Heart left ventricle (tissue), 16 donors: ENCODE measurements at regions of chr21 and their contacts with region 1.

Region 1: DNA sequence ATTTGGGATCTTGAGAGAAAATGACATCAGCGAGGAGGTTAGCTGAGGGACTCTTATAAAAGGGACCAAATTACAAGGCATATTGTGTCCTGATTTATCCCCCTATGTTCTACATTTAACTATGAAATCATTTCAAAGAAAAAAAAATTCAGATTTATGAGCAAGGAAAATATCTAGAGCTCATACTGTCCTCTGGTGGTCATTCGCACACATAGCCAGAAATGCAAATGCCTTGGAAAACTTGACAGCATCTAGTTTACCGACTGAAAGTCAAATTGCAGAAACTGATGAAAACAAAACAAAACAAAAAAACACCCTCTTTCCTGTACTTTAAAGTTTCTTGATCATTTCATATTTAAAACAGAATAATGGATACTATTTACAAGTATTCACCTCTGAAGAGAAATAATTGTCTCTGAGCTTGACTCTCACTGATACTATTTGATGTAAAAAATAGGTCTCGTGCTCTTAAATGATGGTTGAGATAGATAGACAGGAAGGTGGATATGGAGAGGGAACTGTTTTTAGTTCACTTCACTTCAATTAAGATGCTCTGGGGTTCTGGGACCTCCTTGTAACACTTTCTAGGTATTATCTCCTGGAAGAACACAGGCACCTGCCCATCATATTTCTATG is 253.8 kb downstream of the PCP4 start:
- DNase-seq: no peak
- ATAC-seq: no peak
- H3K4me3 ChIP-seq: no peak overlapping the region
- H3K27ac ChIP-seq: no peak overlapping the region
- H3K4me1 ChIP-seq: peaks cover 0 to 3% (median 0%) of the 10 kb centered on the region in 12 donors
- H3K27me3 ChIP-seq: peaks cover 0 to 4% (median 0%) of the 10 kb centered on the region in 9 donors
- CTCF ChIP-seq: peak; percentile 59 to 82 (median 77)
- POLR2A ChIP-seq: no peak

Region 2: DNA sequence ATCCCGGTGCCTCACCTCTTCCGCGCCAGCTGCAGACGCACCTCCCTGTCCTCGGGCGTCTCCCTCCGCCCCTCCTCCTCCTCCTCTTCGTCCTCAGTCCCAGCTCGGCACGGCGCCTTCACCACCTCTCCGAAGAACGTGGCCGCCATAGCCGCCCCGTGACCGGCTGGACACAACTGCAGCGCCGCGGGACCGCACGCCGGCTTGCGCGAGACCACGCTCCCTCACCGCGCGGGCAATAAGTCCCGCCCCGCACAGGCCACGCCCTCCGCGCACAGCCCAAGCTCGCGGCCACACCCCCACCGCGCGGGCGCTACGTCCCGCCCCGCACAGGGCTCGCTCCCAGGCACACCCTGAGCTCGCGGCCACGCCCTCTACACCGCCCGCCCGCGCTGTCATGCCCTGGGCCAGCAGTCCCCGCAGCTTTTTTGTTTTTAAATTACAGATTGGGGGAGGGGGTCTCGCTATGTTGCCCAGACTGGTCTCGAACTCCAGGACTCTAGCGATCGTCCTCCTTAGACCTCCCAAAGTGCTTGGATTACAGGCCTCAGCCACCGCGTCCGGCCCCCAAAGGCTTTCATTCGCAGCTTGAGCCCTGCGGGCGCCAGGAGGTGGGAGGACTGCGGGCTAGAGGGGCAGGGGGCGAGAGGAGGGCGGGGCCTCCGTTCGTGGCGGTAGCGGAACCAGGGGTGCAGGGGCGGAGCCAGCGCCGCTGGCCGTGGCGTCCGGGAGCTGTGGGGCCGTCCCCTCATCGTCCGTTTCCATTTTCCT is 937.6 kb before region 1 on chr21 and contains the start of gene PSMG1:
- intact Hi-C with region 1: no loop called
- DNase-seq: peak; percentile 94 to 97 (median 95)
- ATAC-seq: peak; percentile 97 to 98 (median 98)
- H3K4me3 ChIP-seq: peak within 1 kb of the TSS; percentile 72 to 97 (median 86)
- H3K27ac ChIP-seq: peak within 1 kb of the TSS; percentile 82 to 96 (median 92)
- H3K4me1 ChIP-seq: peaks cover 0 to 24% (median 14%) of the 10 kb centered on the region in 12 donors
- H3K27me3 ChIP-seq: no peaks in the 10 kb centered on the region
- CTCF ChIP-seq: peak in 1 of 12 donors; percentile 14
- POLR2A ChIP-seq: peak in 1 of 2 donors; percentile 72
- total RNA-seq, gene PSMG1: 12.0 to 31.6 (median 25.3) TPM

Region 3: DNA sequence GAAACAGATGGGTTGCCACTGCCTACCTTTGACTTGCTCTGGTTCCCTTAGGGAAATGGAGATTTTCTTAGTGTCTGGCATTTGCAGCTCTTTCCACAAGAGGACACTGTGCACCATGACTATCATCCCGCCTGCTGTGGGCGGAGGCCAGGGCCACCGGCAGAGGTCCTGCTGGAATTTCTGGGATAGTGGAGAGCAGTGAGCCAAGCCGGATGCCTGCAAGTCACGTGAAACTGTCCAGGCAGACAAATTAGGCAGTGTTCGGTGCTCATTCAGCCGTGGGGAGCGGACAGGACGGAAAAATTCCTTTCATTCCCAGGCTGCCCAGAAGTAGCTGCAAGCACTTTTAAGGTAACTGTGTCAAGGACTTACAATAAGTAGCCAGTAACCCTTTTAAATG is 332.7 kb before region 1 on chr21:
- intact Hi-C with region 1: loop called (anchors 1 to 5 kb)
- DNase-seq: peak; percentile 75 to 91 (median 84)
- ATAC-seq: peak; percentile 98 to 99 (median 99)
- H3K4me3 ChIP-seq: peak overlapping the region in 11 of 12 donors; percentile 14 to 50 (median 37)
- H3K27ac ChIP-seq: peak overlapping the region in 8 of 12 donors; percentile 26 to 59 (median 50)
- H3K4me1 ChIP-seq: peaks cover 0 to 12% (median 0%) of the 10 kb centered on the region in 12 donors
- H3K27me3 ChIP-seq: no peaks in the 10 kb centered on the region
- CTCF ChIP-seq: peak; percentile 51 to 92 (median 76)
- POLR2A ChIP-seq: no peak

Region 4: DNA sequence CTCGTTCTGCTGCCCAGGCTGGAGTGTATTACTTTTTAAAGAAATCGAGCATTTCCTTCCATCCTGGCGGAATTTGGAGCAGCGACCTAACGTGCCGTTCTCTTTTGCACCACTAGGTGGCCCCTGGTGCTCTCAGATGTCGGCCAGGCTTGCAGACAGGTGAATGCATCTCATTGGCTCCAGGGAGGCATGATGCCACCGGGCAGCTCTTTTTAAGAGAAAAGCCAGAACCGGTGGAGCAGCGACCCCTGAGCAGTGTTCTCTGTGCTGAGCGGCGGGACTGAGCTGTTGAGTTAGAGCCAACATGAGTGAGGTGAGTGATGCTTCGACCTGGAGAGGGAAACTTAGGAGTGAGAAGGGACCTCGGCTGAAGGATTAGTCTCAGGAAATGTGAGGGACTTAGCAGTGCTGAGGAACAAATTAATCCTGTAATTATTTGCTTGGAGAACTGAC is 253.8 kb before region 1 on chr21 and contains the start of gene PCP4:
- intact Hi-C with region 1: loop called (anchors 2 to 10 kb)
- DNase-seq: peak in 3 of 5 donors; percentile 23 to 29 (median 24)
- ATAC-seq: no peak
- H3K4me3 ChIP-seq: no peak within 1 kb of the TSS
- H3K27ac ChIP-seq: peak within 1 kb of the TSS in 1 of 12 donors; percentile 62
- H3K4me1 ChIP-seq: no peaks in the 10 kb centered on the region
- H3K27me3 ChIP-seq: no peaks in the 10 kb centered on the region
- CTCF ChIP-seq: peak; percentile 53 to 83 (median 70)
- POLR2A ChIP-seq: no peak
- total RNA-seq, gene PCP4: 0.96 to 7.7 (median 3.9) TPM

Region 5: GRCh38 chr21:40043431-40043830 is 77.6 kb before region 1 on chr21:
- intact Hi-C with region 1: loop called in 7 of 10 experiments (anchors 2 to 5 kb)
- DNase-seq: no peak
- ATAC-seq: peak in 2 of 4 donors; percentile 52 to 53
- H3K4me3 ChIP-seq: no peak overlapping the region
- H3K27ac ChIP-seq: no peak overlapping the region
- H3K4me1 ChIP-seq: no peaks in the 10 kb centered on the region
- H3K27me3 ChIP-seq: no peaks in the 10 kb centered on the region
- CTCF ChIP-seq: peak in 7 of 12 donors; percentile 5 to 28 (median 12)
- POLR2A ChIP-seq: no peak

Region 6: GRCh38 chr21:40049394-40050290 is 71.4 kb before region 1 on chr21:
- intact Hi-C with region 1: loop called in 6 of 10 experiments (anchors 5 kb)
- DNase-seq: no peak
- ATAC-seq: no peak
- H3K4me3 ChIP-seq: no peak overlapping the region
- H3K27ac ChIP-seq: peak overlapping the region in 1 of 12 donors; percentile 84
- H3K4me1 ChIP-seq: peaks cover 0 to 13% (median 2%) of the 10 kb centered on the region in 12 donors
- H3K27me3 ChIP-seq: no peaks in the 10 kb centered on the region
- CTCF ChIP-seq: no peak
- POLR2A ChIP-seq: no peak